ENCODE measurements at regions of chr2 and their contacts with region 1.

Region 1: DNA sequence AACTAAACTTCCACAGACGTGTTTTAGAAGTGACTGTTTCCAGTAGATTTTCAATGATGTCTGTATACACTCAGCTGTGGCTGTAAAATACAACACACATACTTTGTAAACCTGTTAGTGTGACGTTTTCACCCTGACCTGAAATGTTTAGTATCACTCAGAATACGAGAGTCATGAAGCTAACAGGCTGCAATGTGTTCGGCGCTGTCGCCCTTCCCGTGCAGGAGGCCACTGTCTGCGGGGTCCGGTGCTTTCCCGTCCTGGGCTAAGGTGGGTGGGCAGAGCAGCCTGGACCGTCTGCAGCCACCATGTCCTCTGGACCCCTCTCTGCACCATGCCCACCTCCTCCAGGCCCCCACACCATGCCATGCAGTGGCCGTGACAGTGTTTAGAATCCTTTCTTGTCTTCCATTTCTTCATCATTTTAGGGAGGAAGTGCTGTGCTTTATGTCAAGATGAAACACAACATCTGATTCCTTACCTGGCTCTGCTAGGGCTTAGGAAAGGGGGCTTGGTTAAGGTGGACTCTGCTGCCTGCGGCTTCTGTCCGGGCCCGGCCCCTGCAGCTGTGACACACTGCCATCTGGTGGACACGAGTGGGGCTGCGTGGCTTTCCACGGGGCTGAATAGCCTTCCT is 53.8 kb upstream of the RBM44 start:
- DNase-seq: peak; percentile 94
- H3K4me3 ChIP-seq: no peak overlapping the region
- H3K27ac ChIP-seq: peak overlapping the region in 3 of 8 donors; percentile 15 to 46 (median 32)
- H3K4me1 ChIP-seq: peaks cover 6 to 61% (median 44%) of the 10 kb centered on the region in 6 donors
- H3K27me3 ChIP-seq: no peaks in the 10 kb centered on the region
- CTCF ChIP-seq: peak; percentile 93 to 99 (median 96)
- POLR2A ChIP-seq: no peak

Region 2: GRCh38 chr2:237408335-237409000 is 336.3 kb before region 1 on chr2:
- intact Hi-C with region 1: no loop called
- DNase-seq: no peak
- H3K4me3 ChIP-seq: no peak overlapping the region
- H3K27ac ChIP-seq: no peak overlapping the region
- H3K4me1 ChIP-seq: no peaks in the 10 kb centered on the region
- H3K27me3 ChIP-seq: peaks cover 0 to 49% (median 10%) of the 10 kb centered on the region in 7 donors
- CTCF ChIP-seq: no peak
- POLR2A ChIP-seq: no peak

Region 3: GRCh38 chr2:237512774-237513466 is 231.8 kb before region 1 on chr2:
- intact Hi-C with region 1: loop called (anchors 10 kb)
- DNase-seq: peak; percentile 92
- H3K4me3 ChIP-seq: no peak overlapping the region
- H3K27ac ChIP-seq: no peak overlapping the region
- H3K4me1 ChIP-seq: peaks cover 0 to 16% (median 7%) of the 10 kb centered on the region in 6 donors
- H3K27me3 ChIP-seq: peaks cover 0 to 45% (median 0%) of the 10 kb centered on the region in 7 donors
- CTCF ChIP-seq: peak; percentile 58 to 89 (median 81)
- POLR2A ChIP-seq: no peak

Region 4: GRCh38 chr2:237581751-237582746 is 162.7 kb before region 1 on chr2:
- intact Hi-C with region 1: loop called (anchors 10 kb)
- DNase-seq: no peak
- H3K4me3 ChIP-seq: peak overlapping the region in 1 of 8 donors; percentile 29
- H3K27ac ChIP-seq: peak overlapping the region in 4 of 8 donors; percentile 12 to 54 (median 30)
- H3K4me1 ChIP-seq: peaks cover 0 to 23% (median 11%) of the 10 kb centered on the region in 6 donors
- H3K27me3 ChIP-seq: peaks cover 0 to 12% (median 0%) of the 10 kb centered on the region in 7 donors
- CTCF ChIP-seq: peak in 10 of 11 experiments; percentile 17 to 58 (median 48)
- POLR2A ChIP-seq: no peak

Region 5: GRCh38 chr2:237673126-237674001 is 71.4 kb before region 1 on chr2:
- intact Hi-C with region 1: loop called (anchors 1 kb)
- DNase-seq: peak; percentile 96
- H3K4me3 ChIP-seq: peak overlapping the region; percentile 28 to 68 (median 40)
- H3K27ac ChIP-seq: peak overlapping the region; percentile 76 to 94 (median 92)
- H3K4me1 ChIP-seq: peaks cover 52 to 92% (median 81%) of the 10 kb centered on the region in 6 donors
- H3K27me3 ChIP-seq: no peaks in the 10 kb centered on the region
- CTCF ChIP-seq: peak; percentile 49 to 92 (median 80)
- POLR2A ChIP-seq: no peak

Region 6: GRCh38 chr2:237833546-237833945 is 88.8 kb after region 1 on chr2:
- intact Hi-C with region 1: no loop called
- DNase-seq: no peak
- H3K4me3 ChIP-seq: no peak overlapping the region
- H3K27ac ChIP-seq: no peak overlapping the region
- H3K4me1 ChIP-seq: no peaks in the 10 kb centered on the region
- H3K27me3 ChIP-seq: no peaks in the 10 kb centered on the region
- CTCF ChIP-seq: no peak
- POLR2A ChIP-seq: no peak